ENCODE measurements at regions of chr19 and their contacts with region 1.

Region 1: DNA sequence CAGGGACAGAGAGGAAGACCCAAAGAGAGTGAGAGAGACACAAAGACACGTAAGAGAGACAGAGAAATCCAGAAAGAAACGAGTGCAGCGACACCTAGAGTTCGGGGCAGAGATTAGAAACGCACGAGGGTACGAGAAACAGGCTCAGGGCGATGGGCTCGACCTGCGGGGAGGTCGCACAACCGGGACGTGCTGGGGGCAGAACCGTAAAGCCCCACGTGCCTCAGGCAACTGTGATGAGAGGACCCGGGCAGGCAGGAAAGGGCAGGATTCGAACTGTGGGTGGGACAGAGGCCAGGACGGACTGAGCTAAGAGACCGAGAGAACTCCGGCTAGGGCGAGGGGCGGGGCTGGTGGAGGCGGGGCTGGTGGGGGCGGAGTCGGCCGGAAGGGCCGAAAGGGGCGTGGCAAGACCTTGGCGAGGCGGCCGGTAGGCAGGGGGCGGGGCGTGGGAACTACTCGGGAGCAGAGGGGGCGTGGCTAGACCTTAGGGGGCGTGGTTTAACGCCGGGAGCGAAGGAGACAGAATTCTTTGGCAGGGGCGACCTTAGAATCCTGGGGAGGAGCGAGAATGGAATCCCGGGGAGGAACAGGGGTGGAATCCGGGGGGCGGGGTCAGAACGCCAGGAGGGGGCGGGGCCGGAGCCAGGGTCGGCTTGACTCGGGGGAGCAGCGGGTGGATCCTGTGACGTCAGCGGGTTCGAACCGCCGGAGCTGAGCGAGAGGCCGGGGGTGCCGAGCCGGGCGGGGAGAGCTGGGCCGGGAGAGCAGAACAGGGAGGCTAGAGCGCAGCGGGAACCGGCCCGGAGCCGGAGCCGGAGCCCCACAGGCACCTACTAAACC is at the start of gene NECTIN2:
- DNase-seq: peak; percentile 97 to 98 (median 98)
- ATAC-seq: peak; percentile 61
- H3K4me3 ChIP-seq: peak within 1 kb of the TSS; percentile 92
- H3K27ac ChIP-seq: peak within 1 kb of the TSS; percentile 97
- H3K4me1 ChIP-seq: peaks cover 38 to 64% of the 10 kb centered on the region in 2 experiments
- H3K27me3 ChIP-seq: no peaks in the 10 kb centered on the region
- CTCF ChIP-seq: peak; percentile 76 to 92 (median 87)
- EP300 ChIP-seq: no peak
- POLR2A ChIP-seq: peak; percentile 64
- RAD21 ChIP-seq: peak; percentile 51 to 55; a peak in 3 of 4 replicates
- polyA plus RNA-seq, gene NECTIN2: 3.9 to 4.9 TPM

Region 2: DNA sequence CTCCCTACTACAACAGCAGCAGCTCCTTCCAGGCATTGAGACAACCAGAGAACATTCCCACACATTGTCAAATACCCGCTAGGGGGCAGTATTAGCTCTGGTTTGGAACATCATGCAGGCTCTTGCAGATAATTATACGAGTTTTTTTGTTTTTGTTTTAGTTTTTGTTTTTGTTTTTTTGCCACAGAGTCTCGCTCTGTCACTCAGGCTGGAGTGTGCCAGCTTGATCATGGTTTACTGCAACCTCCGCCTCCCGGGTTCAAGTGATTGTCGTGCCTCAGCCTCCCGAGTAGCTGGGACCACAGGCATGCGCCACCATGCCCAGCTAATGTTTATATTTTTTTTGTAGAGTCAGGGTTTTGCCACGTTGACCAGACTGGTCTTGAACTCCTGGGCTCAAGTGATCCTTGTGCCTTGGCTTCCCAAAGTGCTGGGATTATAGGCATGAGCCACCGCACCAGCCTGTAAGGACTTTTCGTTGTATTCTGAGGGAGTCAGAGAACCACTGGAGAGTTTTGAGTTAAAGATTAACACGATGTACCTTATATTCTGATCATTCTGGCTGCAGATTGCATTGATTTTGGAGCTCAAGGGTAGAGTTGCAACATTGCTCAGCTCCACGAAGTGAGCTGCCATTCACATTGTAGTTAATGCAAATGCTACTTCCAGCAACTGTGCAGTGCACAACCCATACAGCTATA is 274.7 kb before region 1 on chr19:
- CTCF ChIA-PET with region 1: no interaction called
- POLR2A ChIA-PET with region 1: no interaction called
- in situ Hi-C with region 1: no loop called
- intact Hi-C with region 1: loop called (anchors 5 kb)
- DNase-seq: peak; percentile 67 to 86 (median 68)
- ATAC-seq: peak; percentile 94
- H3K4me3 ChIP-seq: no peak overlapping the region
- H3K27ac ChIP-seq: no peak overlapping the region
- H3K4me1 ChIP-seq: peaks cover 12 to 33% of the 10 kb centered on the region in 2 experiments
- H3K27me3 ChIP-seq: no peaks in the 10 kb centered on the region
- CTCF ChIP-seq: peak; percentile 78 to 87 (median 80)
- EP300 ChIP-seq: no peak
- POLR2A ChIP-seq: no peak
- RAD21 ChIP-seq: peak; percentile 82 to 83

Region 3: DNA sequence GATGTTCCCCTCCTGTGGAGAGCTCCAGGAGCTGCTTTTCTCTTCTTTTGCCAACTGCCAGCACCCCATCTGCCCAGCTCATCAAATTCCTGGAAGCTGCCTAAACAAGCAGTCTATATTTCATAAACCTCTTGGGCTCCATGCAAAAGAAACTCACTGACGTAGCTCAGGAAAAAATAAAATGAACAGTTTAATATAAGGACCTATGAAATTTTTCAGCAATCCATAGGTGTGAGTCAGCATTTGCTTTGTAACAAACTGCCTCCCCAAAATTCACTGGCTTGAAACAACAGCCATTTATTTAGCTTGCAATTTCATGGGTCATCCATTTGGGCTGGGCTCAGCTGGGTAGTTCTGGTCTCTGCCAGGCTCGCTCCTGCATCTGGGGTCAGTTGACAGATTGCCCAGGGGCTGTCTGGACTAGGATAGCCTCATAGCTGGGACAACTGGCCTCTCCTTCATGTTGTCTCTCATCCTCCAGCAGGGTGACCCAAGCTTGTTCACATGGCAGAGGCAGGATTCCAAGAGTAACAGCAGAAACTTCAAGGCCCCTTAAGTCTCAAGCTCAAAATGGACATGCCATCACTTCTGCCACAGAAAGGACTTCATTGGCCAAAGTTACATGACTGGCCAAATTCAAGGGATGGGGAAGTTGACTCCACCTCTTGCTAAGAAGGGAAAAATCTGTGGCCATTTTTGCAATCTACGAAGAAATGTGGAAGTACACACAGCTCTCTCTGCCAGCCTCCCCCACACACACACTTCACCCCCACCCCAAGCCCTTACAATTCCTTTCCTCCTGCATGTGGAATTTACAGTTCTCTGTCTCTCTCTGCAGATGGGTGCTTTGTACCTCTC is 210.0 kb before region 1 on chr19:
- CTCF ChIA-PET with region 1: no interaction called
- POLR2A ChIA-PET with region 1: no interaction called
- in situ Hi-C with region 1: no loop called
- intact Hi-C with region 1: no loop called
- DNase-seq: no peak
- ATAC-seq: no peak; the same call in 2 of the 3 replicates
- H3K4me3 ChIP-seq: no peak overlapping the region
- H3K27ac ChIP-seq: no peak overlapping the region
- H3K4me1 ChIP-seq: peaks cover 3 to 7% of the 10 kb centered on the region in 2 experiments; a peak in 3 of 5 replicates
- H3K27me3 ChIP-seq: no peaks in the 10 kb centered on the region
- CTCF ChIP-seq: no peak
- EP300 ChIP-seq: no peak
- POLR2A ChIP-seq: no peak
- RAD21 ChIP-seq: no peak

Region 4: GRCh38 chr19:44689056-44689895 is 156.6 kb before region 1 on chr19:
- CTCF ChIA-PET with region 1: interaction called, 8 read pairs
- POLR2A ChIA-PET with region 1: no interaction called
- in situ Hi-C with region 1: no loop called
- intact Hi-C with region 1: loop called (anchors 1 kb)
- DNase-seq: peak; percentile 69 to 84 (median 72)
- ATAC-seq: peak; percentile 90
- H3K4me3 ChIP-seq: no peak overlapping the region
- H3K27ac ChIP-seq: no peak overlapping the region
- H3K4me1 ChIP-seq: peaks cover 17 to 26% of the 10 kb centered on the region in 2 experiments
- H3K27me3 ChIP-seq: no peaks in the 10 kb centered on the region
- CTCF ChIP-seq: peak; percentile 89 to 92 (median 90)
- EP300 ChIP-seq: no peak
- POLR2A ChIP-seq: no peak
- RAD21 ChIP-seq: peak; percentile 83 to 90

Region 5: GRCh38 chr19:44789943-44790483 is 55.8 kb before region 1 on chr19:
- CTCF ChIA-PET with region 1: interaction called, 19 read pairs
- POLR2A ChIA-PET with region 1: interaction called, 3 read pairs
- in situ Hi-C with region 1: loop called (anchors 5 kb)
- intact Hi-C with region 1: no loop called
- DNase-seq: no peak
- ATAC-seq: no peak
- H3K4me3 ChIP-seq: no peak overlapping the region
- H3K27ac ChIP-seq: no peak overlapping the region
- H3K4me1 ChIP-seq: no peaks in the 10 kb centered on the region; a peak in 2 of 5 replicates
- H3K27me3 ChIP-seq: no peaks in the 10 kb centered on the region
- CTCF ChIP-seq: no peak
- EP300 ChIP-seq: no peak
- POLR2A ChIP-seq: no peak
- RAD21 ChIP-seq: no peak

Region 6: DNA sequence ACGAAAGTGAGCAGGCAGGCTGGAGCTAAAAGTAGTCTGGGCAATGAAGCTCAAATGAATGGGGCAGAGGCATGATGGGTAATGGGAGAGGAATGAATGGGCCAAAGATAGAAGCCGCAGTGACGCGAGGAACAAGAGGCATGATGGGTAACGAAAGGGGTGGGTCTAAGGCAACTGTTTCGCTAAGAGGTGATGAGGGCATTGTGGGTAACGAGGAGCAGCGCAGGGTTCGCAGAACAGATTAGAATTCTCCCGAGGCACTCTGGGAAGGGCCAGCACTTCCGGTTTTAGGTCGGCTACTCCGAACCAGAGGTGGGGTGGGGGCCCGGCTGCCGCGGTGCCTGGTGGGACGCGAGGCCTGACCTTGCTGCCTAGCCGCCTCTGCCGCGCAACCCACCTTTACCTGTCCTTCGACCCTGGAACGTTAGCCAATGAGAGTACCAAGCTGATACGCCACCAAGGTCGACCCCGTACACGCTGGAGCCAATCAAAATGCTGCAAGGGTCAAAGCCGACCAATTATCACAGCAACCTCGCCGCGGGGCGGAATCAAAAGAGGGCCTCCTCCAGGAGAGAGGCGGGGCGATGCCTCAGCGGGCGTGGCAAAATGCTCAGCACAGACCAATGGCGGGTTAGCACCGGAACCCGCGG is 44.7 kb after region 1 on chr19:
- CTCF ChIA-PET with region 1: no interaction called
- POLR2A ChIA-PET with region 1: interaction called, 5 read pairs
- in situ Hi-C with region 1: no loop called
- intact Hi-C with region 1: loop called (anchors 2 kb)
- DNase-seq: peak; percentile 93 to 100 (median 96)
- ATAC-seq: peak; percentile 93
- H3K4me3 ChIP-seq: peak overlapping the region; percentile 46
- H3K27ac ChIP-seq: peak overlapping the region; percentile 96
- H3K4me1 ChIP-seq: peaks cover 17 to 33% of the 10 kb centered on the region in 2 experiments
- H3K27me3 ChIP-seq: no peaks in the 10 kb centered on the region
- CTCF ChIP-seq: no peak
- EP300 ChIP-seq: peak; percentile 46; the same call in 1 of the 2 replicates
- POLR2A ChIP-seq: peak; percentile 98
- RAD21 ChIP-seq: peak in 1 of 2 experiments; percentile 18; a peak in 1 of 4 replicates

Region 7: DNA sequence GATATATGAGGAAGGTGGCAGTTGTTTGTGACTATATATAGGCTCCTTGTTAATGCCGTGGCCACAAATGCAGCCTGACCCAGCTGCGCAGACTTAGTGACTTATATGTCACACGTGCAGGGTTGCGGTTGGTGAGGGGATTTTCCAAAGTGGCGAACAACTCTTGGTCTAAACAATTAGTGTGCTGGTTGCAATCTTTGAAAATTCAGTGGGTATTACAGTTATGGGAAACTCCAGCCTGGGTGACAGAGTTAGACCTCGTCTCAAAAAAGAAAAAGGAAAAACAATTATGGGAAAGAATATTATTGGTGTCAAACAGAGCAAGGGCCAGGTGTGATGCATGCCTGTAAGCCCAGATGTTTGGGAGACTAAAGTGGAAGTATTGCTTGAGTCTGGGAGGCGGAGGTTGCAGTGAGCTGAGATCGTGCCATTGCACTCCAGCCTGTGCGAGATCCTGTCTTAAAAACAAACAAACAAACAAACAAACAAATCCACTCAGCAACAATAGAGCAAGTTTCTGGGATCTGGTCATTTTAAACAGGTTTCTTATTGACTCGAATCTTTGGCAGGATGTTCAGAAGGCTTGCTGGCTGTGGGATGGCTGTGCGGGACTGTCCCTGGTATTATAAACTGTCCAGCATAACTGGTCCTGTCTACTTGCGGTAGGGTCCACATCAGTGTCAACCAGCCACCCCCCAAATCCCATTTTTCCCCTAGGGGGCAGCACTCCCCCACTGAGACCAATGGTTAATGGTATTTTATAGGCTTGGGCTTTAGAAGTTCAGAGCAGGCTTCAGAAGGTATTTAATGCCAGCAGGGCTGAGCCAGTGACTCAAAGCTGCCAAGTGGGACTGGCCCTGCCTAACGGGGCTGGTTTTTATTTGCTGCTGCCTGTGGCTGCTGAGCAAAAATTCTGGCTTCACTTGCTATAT is 170.8 kb after region 1 on chr19:
- CTCF ChIA-PET with region 1: no interaction called
- POLR2A ChIA-PET with region 1: no interaction called
- in situ Hi-C with region 1: no loop called
- intact Hi-C with region 1: no loop called
- DNase-seq: peak; percentile 71 to 86 (median 78)
- ATAC-seq: peak; percentile 98
- H3K4me3 ChIP-seq: no peak overlapping the region
- H3K27ac ChIP-seq: no peak overlapping the region
- H3K4me1 ChIP-seq: peaks cover 0 to 1% of the 10 kb centered on the region in 2 experiments; a peak in 2 of 5 replicates
- H3K27me3 ChIP-seq: no peaks in the 10 kb centered on the region
- CTCF ChIP-seq: peak; percentile 85 to 89 (median 87)
- EP300 ChIP-seq: no peak
- POLR2A ChIP-seq: no peak
- RAD21 ChIP-seq: peak; percentile 65 to 85

Measured in K562 (cell line).